ENCODE measurements at regions of chrX and their contacts with region 1.

Region 1: DNA sequence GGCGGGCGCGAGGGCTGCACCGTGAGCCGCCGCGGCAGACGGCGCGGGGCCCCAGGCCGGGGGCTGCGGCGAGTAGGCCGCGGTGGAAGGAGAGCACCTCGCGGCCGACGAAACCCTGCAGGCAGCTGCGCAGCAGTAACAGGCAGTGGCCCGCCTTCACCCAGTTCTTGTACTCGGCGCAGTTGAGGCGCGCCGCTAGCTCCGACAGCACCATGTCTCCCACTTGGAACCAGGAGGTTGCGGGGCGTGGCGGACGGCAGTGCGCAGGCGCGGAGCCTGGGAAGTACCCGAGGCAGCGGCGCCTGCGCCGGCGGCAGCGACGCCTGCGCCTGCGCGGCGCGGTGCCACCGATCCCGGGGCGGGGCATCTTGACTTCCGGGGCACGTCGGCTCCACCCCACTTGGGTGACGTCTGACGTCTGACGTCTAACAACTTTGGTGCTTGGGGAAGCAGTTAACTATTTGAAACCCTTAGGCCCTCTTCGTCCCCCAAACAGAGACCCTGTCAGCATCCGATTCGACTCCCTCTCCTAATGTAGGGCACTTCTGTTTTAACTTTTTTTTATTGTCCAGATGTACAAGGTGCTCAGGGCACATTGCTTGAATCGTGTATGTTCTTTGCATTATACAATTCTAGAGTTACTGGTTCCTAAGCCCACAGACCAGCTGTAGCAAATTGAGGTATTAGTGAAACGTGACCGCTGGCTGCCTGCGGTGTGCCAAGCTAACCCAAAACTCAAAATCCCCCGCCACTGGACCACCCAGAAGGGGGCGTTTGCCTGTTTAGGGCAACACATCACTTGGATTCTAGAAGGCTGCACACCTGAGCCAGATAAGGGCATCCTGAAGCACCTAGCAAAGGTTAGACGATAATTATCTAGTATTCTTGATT is at the start of gene CXorf38:
- DNase-seq: peak; percentile 83 to 90 (median 88)
- H3K4me3 ChIP-seq: peak within 1 kb of the TSS; percentile 42 to 89 (median 77)
- H3K27ac ChIP-seq: peak within 1 kb of the TSS in 53 of 59 donors; percentile 16 to 89 (median 75)
- H3K27me3 ChIP-seq: peaks cover 0 to 37% (median 0%) of the 10 kb centered on the region in 45 donors
- CTCF ChIP-seq: peak in 21 of 56 donors; percentile 4 to 37 (median 17)
- total RNA-seq, gene CXorf38: 5.0 to 12.5 (median 8.3) TPM

Region 2: GRCh38 chrX:40496728-40497127 is 150.8 kb before region 1 on chrX:
- intact Hi-C with region 1: no loop called
- DNase-seq: peak in 3 of 10 donors; percentile 36 to 56 (median 47)
- H3K4me3 ChIP-seq: no peak overlapping the region
- H3K27ac ChIP-seq: peak overlapping the region in 2 of 59 donors; percentile 6 to 21
- H3K27me3 ChIP-seq: peaks cover 0 to 65% (median 19%) of the 10 kb centered on the region in 45 donors
- CTCF ChIP-seq: peak in 23 of 56 donors; percentile 11 to 46 (median 22)

Region 3: DNA sequence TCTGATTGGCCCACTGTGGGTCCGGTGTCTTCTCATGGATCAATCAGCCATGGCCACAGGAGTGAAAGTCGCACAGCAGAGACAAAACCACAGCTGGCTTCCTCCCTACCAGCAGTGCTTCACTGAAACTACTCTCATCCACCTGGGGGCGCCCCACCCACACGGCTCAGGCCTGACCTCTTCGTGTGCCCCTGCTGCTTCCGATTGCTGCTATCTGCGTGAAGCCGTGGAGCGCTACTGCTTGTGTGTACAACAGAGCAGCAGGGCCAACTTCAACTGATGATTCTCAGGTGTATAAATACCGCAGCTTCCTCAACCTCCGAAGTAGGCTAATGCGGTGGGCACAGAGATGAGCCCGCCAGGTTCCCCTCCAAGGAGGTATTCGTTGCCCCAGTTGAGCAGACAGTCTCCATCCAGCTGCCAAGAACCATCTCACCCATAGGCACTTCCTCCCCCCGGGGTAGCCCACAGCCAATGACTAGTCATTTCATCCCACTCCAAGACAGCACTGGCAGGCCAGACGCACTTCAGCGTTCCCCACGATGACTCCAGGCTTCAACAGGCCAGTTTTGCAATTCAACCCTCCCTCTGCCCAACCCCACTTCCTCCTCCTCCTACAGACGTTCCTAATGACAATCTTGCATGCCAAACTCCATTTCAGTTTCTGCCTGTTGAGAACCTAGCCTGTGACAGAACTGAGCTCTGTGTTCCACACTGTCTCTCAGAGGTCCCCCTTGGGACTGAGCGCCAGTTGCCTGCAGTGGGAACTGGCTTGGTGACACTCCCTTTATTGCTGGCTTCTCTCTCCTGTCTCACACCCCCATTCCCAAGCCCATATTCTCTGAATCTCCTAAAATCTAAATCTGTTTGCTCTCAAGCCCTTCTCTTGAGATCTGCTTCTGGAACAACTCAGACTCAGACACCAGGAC is 108.1 kb before region 1 on chrX:
- intact Hi-C with region 1: loop called in 1 of 2 experiments (anchors 10 kb)
- DNase-seq: peak in 1 of 10 donors; percentile 12
- H3K4me3 ChIP-seq: no peak overlapping the region
- H3K27ac ChIP-seq: no peak overlapping the region
- H3K27me3 ChIP-seq: peaks cover 0 to 95% (median 41%) of the 10 kb centered on the region in 45 donors
- CTCF ChIP-seq: no peak

Region 4: GRCh38 chrX:40580537-40581335 is 66.8 kb before region 1 on chrX and contains the start of gene ATP6AP2:
- intact Hi-C with region 1: loop called in 1 of 2 experiments (anchors 5 kb)
- DNase-seq: peak; percentile 82 to 95 (median 92)
- H3K4me3 ChIP-seq: peak within 1 kb of the TSS; percentile 40 to 85 (median 71)
- H3K27ac ChIP-seq: peak within 1 kb of the TSS in 56 of 59 donors; percentile 15 to 88 (median 80)
- H3K27me3 ChIP-seq: peaks cover 0 to 79% (median 10%) of the 10 kb centered on the region in 45 donors
- CTCF ChIP-seq: no peak
- total RNA-seq, gene ATP6AP2: 86.2 to 263 (median 179) TPM

Region 5: GRCh38 chrX:40622479-40623138 is 24.9 kb before region 1 on chrX:
- intact Hi-C with region 1: no loop called
- DNase-seq: no peak
- H3K4me3 ChIP-seq: no peak overlapping the region
- H3K27ac ChIP-seq: no peak overlapping the region
- H3K27me3 ChIP-seq: peaks cover 0 to 66% (median 6%) of the 10 kb centered on the region in 45 donors
- CTCF ChIP-seq: no peak

Region 6: DNA sequence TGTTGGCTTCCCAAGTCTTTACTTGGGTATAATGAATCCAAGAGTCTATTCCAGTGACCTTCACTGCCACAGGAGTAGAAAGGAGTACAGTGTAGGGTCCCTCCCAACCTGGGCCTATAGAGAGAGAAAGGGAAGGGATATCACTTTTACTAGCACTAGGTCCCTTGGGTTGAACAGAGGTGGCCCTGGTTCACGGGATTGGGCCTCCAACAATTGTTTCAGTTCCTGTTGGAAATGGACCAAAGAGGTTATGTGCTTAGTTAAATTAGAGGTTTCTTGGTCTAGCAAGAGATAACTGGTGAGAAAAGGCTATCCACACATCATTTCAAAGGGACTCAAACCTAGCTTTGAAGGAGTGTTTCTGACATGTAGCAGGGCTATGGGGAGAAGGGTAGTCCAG is 144.9 kb after region 1 on chrX:
- intact Hi-C with region 1: loop called (anchors 2 to 10 kb)
- DNase-seq: no peak
- H3K4me3 ChIP-seq: no peak overlapping the region
- H3K27ac ChIP-seq: no peak overlapping the region
- H3K27me3 ChIP-seq: peaks cover 0 to 76% (median 22%) of the 10 kb centered on the region in 45 donors
- CTCF ChIP-seq: no peak

Region 7: DNA sequence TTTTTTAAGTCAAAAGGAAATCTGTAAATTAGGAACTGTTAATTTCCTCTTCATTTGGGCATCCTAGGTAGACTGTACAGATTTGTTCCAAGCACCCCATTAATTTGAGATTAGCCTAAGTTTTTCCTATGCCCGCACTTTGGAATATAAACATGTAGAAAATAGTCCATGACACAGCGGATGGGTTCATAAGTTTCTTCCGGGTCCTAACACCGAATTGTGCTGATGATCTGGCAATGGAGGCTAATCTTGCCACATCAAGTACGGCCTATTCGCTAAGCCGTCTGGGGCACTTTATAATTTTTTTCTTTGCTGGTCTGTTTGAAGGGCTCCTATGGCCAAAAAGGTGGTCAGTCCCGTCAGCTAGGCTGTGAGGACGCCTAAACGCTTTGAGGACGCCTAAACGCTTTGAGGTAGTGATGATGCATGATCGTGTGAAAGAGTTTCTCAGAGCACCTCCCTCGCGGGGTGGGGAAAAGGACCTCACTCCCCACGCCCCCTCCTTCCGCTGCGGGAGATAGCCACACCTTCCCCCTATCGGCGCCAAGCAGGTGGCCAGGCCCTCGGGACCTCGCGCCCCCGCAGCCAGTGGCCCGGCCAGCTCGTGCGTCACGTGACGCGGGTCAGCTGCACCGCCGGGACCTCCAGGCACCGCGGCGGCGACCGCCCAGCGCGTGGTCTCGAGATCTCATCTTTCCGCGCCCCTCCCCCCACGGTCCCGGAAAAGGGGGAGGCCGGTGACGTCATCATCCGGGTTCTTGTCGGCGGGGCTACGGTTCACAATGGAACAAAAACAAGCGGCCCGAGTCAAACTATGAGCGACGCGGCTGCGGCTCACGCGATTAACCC is 436.7 kb after region 1 on chrX:
- intact Hi-C with region 1: loop called in 1 of 2 experiments (anchors 10 kb)
- DNase-seq: peak; percentile 93 to 96 (median 94)
- H3K4me3 ChIP-seq: peak overlapping the region; percentile 45 to 99 (median 93)
- H3K27ac ChIP-seq: peak overlapping the region; percentile 92 to 99 (median 98)
- H3K27me3 ChIP-seq: peaks cover 0 to 8% (median 0%) of the 10 kb centered on the region in 45 donors
- CTCF ChIP-seq: peak in 15 of 56 donors; percentile 5 to 35 (median 16)

Region 8: GRCh38 chrX:41116948-41117347 is 469.4 kb after region 1 on chrX:
- intact Hi-C with region 1: loop called (anchors 10 kb)
- DNase-seq: no peak
- H3K4me3 ChIP-seq: no peak overlapping the region
- H3K27ac ChIP-seq: no peak overlapping the region
- H3K27me3 ChIP-seq: no peaks in the 10 kb centered on the region
- CTCF ChIP-seq: no peak

Region 9: DNA sequence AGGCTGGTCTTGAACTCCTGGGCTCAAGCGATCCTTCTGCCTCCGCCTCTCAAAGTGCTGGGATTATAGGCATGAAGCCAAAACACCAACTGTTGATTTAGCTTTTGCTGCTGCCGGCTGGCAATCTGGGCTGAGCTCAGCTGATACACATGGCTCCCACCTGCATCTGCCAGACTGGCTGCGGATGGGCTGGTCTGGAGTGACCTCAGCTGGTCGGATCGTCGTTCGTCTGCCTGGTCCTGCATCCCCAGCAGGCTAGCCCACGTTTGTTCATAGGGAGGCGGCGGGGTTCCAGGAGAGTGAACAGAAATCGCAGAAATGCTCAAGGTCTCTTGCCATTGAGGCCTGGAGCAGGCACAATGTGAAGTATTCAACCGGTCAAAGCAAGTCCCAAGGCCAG is 612.0 kb after region 1 on chrX:
- intact Hi-C with region 1: loop called in 1 of 2 experiments (anchors 10 kb)
- DNase-seq: no peak
- H3K4me3 ChIP-seq: no peak overlapping the region
- H3K27ac ChIP-seq: no peak overlapping the region
- H3K27me3 ChIP-seq: peaks cover 0 to 61% (median 12%) of the 10 kb centered on the region in 45 donors
- CTCF ChIP-seq: no peak